CD4-positive, alpha-beta T cell (primary cell): ENCODE measurements at regions of chr14 and their contacts with region 1.

Region 1: GRCh38 chr14:20682435-20683124 is 1.8 kb upstream of the RNASE4 start:
- DNase-seq: peak; percentile 62 to 93 (median 74)
- ATAC-seq: peak; percentile 60
- H3K4me3 ChIP-seq: peak overlapping the region; percentile 79
- H3K4me3 Mint-ChIP-seq: no peak overlapping the region
- H3K27ac ChIP-seq: peak overlapping the region; percentile 94 to 95
- H3K27ac Mint-ChIP-seq: no peak overlapping the region
- H3K4me1 ChIP-seq: peaks cover 53% of the 10 kb centered on the region
- H3K4me1 Mint-ChIP-seq: peaks cover 5% of the 10 kb centered on the region
- H3K27me3 ChIP-seq: no peaks in the 10 kb centered on the region
- H3K27me3 Mint-ChIP-seq: peaks cover 7% of the 10 kb centered on the region
- CTCF ChIP-seq: no peak

Region 2: DNA sequence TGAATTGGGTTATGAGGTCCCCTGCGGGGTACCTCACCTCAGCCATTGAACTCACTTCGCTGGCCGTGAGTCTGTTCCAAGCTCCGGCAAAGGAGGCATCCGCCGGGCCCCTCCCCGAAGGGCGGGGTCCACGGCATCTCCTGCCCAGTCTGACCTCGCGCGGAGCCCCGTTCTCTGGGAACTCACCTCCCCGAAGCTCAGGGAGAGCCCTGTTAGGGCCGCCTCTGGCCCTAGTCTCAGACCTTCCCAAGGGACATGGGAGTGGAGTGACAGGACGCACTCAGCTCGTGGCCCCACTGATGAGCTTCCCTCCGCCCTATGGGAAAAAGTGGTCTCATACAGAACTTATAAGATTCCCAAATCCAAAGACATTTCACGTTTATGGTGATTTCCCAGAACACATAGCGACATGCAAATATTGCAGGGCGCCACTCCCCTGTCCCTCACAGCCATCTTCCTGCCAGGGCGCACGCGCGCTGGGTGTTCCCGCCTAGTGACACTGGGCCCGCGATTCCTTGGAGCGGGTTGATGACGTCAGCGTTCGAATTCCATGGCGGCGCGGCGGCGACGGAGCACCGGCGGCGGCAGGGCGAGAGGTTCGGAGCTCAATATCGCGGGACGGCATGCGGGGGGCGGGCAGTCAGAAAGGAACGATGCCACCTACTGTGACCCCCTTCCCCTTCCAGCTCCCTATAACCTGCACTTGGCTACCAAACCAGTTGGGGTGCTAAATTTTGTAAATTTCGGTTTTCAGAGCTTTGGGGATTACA is 339.3 kb before region 1 on chr14 and contains the start of gene PARP2:
- CTCF ChIA-PET with region 1: interaction called, 4 read pairs
- POLR2A ChIA-PET with region 1: interaction called, 85 read pairs
- intact Hi-C with region 1: loop called (anchors 2 to 5 kb)
- DNase-seq: peak; percentile 70 to 97 (median 82)
- ATAC-seq: peak; percentile 81
- H3K4me3 ChIP-seq: peak within 1 kb of the TSS; percentile 83
- H3K4me3 Mint-ChIP-seq: peak within 1 kb of the TSS; percentile 99
- H3K27ac ChIP-seq: peak within 1 kb of the TSS; percentile 92 to 95
- H3K27ac Mint-ChIP-seq: peak within 1 kb of the TSS; percentile 97
- H3K4me1 ChIP-seq: no peaks in the 10 kb centered on the region
- H3K4me1 Mint-ChIP-seq: peaks cover 11% of the 10 kb centered on the region
- H3K27me3 ChIP-seq: no peaks in the 10 kb centered on the region
- H3K27me3 Mint-ChIP-seq: no peaks in the 10 kb centered on the region
- CTCF ChIP-seq: no peak
- total RNA-seq, gene PARP2: 16.3 to 20.4 TPM

Region 3: GRCh38 chr14:20454516-20455354 is 227.8 kb before region 1 on chr14 and contains the starts of genes APEX1 and OSGEP:
- CTCF ChIA-PET with region 1: no interaction called
- POLR2A ChIA-PET with region 1: interaction called, 22 read pairs
- intact Hi-C with region 1: loop called (anchors 2 to 5 kb)
- DNase-seq: peak; percentile 94 to 100 (median 97)
- ATAC-seq: peak; percentile 77
- H3K4me3 ChIP-seq: peak within 1 kb of the TSS; percentile 66
- H3K4me3 Mint-ChIP-seq: no peak within 1 kb of the TSS
- H3K27ac ChIP-seq: peak within 1 kb of the TSS; percentile 92 to 97
- H3K27ac Mint-ChIP-seq: no peak within 1 kb of the TSS
- H3K4me1 ChIP-seq: peaks cover 37% of the 10 kb centered on the region
- H3K4me1 Mint-ChIP-seq: peaks cover 6% of the 10 kb centered on the region
- H3K27me3 ChIP-seq: no peaks in the 10 kb centered on the region
- H3K27me3 Mint-ChIP-seq: no peaks in the 10 kb centered on the region
- CTCF ChIP-seq: no peak
- total RNA-seq, gene APEX1: 125 to 127 TPM
- total RNA-seq, gene OSGEP: 49.2 to 52.9 TPM

Region 4: GRCh38 chr14:20632682-20633428 is 49.7 kb before region 1 on chr14:
- CTCF ChIA-PET with region 1: interaction called, 12 read pairs
- POLR2A ChIA-PET with region 1: interaction called, 65 read pairs
- intact Hi-C with region 1: loop called (anchors 1 to 5 kb)
- DNase-seq: peak in 11 of 14 experiments; percentile 15 to 84 (median 50)
- ATAC-seq: peak; percentile 58
- H3K4me3 ChIP-seq: peak overlapping the region; percentile 59
- H3K4me3 Mint-ChIP-seq: peak overlapping the region; percentile 97
- H3K27ac ChIP-seq: no peak overlapping the region
- H3K27ac Mint-ChIP-seq: peak overlapping the region; percentile 94
- H3K4me1 ChIP-seq: peaks cover 34% of the 10 kb centered on the region
- H3K4me1 Mint-ChIP-seq: peaks cover 54% of the 10 kb centered on the region
- H3K27me3 ChIP-seq: peaks cover 0 to 7% of the 10 kb centered on the region in 2 experiments
- H3K27me3 Mint-ChIP-seq: peaks cover 27% of the 10 kb centered on the region
- CTCF ChIP-seq: no peak

Region 5: DNA sequence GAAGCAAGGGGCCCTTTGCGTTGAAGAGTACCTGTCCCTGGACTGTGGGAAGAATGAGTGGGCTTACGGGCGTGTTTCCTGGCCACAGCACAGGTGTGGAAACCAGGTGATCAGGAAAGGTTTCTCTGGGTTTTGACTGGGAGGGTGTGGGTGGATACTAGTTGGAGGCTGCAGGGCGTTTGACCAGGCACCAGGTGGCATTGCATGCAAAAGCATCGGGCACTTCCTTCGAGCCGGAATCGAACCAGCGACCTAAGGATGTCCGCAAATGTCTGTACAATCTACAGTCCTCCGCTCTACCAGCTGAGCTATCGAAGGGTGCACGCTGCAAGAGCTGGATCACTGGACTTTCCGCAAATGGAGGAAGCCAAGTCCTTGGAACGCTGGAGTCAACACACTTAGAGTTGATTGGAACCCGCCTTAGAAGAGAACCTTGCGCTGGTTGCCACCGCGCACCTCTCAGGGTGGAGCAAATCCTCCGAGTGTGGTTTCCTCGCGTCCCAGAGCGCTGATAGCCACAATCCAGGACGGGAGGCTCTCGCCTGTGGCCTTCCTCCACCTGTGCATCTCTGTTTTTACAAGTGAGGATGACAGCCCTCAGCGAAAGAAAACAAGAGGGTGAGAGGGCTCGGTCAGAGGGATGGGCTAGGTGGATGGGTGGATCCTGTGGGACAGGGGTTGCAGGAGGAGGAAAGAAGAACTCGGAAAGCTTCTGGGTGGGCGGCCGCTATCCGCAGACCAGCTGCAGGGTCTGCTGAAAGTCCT is 19.4 kb before region 1 on chr14:
- CTCF ChIA-PET with region 1: interaction called, 8 read pairs
- POLR2A ChIA-PET with region 1: interaction called, 45 read pairs
- intact Hi-C with region 1: loop called (anchors 1 to 2 kb)
- DNase-seq: peak; percentile 65 to 92 (median 74)
- ATAC-seq: peak; percentile 89
- H3K4me3 ChIP-seq: peak overlapping the region; percentile 54
- H3K4me3 Mint-ChIP-seq: peak overlapping the region; percentile 89
- H3K27ac ChIP-seq: no peak overlapping the region
- H3K27ac Mint-ChIP-seq: peak overlapping the region; percentile 85
- H3K4me1 ChIP-seq: peaks cover 22% of the 10 kb centered on the region
- H3K4me1 Mint-ChIP-seq: peaks cover 35% of the 10 kb centered on the region
- H3K27me3 ChIP-seq: no peaks in the 10 kb centered on the region
- H3K27me3 Mint-ChIP-seq: peaks cover 18% of the 10 kb centered on the region
- CTCF ChIP-seq: peak; percentile 72